Esophagus muscularis mucosa (tissue), 4 donors: ENCODE measurements at regions of chr17 and their contacts with region 1.

Region 1: DNA sequence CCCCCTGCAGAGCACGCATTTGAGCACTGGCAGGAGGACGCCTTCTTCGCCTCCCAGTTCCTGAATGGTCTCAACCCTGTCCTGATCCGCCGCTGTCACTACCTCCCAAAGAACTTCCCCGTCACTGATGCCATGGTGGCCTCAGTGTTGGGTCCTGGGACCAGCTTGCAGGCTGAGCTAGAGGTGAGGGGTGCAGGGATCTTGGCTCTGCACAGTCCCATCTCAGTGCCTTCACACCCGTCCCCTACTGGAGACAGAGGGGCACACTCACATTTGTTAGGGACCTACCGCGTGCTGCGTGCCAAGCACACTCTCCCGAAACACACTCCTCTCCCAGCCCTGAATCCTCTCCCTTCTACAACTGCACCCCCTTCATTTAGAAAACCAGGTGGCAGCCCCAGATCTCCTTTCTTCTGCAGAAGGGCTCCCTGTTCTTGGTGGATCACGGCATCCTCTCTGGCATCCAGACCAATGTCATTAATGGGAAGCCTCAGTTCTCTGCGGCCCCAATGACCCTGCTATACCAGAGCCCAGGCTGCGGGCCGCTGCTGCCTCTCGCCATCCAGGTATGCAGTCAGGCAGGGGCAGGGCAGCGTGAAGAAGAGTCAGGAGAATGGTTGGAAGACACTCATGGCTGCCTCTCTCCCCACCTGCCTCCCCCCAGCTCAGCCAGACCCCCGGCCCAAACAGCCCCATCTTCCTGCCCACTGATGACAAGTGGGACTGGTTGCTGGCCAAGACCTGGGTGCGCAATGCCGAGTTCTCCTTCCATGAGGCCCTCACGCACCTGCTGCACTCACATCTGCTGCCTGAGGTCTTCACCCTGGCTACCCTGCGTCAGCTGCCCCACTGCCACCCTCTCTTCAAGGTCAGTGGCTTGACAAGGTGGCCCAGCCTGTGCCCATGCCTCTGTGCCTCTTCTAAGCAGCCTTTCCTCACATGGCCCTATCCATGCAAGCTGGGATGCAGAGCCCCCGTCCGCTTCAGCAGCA is 6.3 kb downstream of the ALOX15B start:
- DNase-seq: no peak
- H3K4me3 ChIP-seq: no peak overlapping the region
- H3K27ac ChIP-seq: no peak overlapping the region
- H3K4me1 ChIP-seq: peaks cover 0 to 17% (median 9%) of the 10 kb centered on the region in 4 donors
- H3K27me3 ChIP-seq: peaks cover 0 to 56% (median 0%) of the 10 kb centered on the region in 4 donors
- CTCF ChIP-seq: no peak
- EP300 ChIP-seq: no peak
- POLR2A ChIP-seq: no peak

Region 2: GRCh38 chr17:8012724-8013640 is 32.1 kb before region 1 on chr17:
- intact Hi-C with region 1: loop called (anchors 5 kb)
- DNase-seq: no peak
- H3K4me3 ChIP-seq: no peak overlapping the region
- H3K27ac ChIP-seq: no peak overlapping the region
- H3K4me1 ChIP-seq: peaks cover 10 to 19% (median 18%) of the 10 kb centered on the region in 4 donors
- H3K27me3 ChIP-seq: peaks cover 0 to 62% (median 18%) of the 10 kb centered on the region in 4 donors
- CTCF ChIP-seq: no peak
- EP300 ChIP-seq: no peak
- POLR2A ChIP-seq: no peak

Region 3: DNA sequence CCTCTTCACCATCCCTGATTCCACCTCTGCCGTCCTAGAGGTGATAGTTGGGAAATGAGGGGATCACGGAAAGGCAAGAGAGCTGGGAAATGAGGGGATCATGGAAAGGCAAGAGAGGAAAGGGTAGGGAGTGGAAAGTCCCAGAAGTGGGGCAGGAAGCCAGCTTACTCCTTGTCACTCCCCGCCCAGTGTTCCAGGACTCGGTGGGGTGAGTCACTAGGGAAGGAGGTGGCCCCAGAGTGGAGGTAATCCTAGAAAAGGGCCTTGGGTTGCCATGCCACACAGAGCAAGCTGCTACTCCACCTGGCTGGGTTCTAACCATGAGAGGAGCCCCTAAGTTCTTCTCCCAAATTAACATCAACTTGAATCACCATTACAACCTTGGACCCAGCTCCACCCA is 58.4 kb after region 1 on chr17:
- intact Hi-C with region 1: no loop called
- DNase-seq: no peak
- H3K4me3 ChIP-seq: no peak overlapping the region
- H3K27ac ChIP-seq: no peak overlapping the region
- H3K4me1 ChIP-seq: no peaks in the 10 kb centered on the region
- H3K27me3 ChIP-seq: peaks cover 0 to 27% (median 0%) of the 10 kb centered on the region in 4 donors
- CTCF ChIP-seq: no peak
- EP300 ChIP-seq: no peak
- POLR2A ChIP-seq: no peak